ENCODE measurements at regions of chr6 and their contacts with region 1.

Region 1: GRCh38 chr6:69090132-69090531 is 455.1 kb downstream of the ADGRB3 start:
- DNase-seq: peak in 1 of 2 donors; percentile 17
- ATAC-seq: peak; percentile 55 to 98 (median 86)
- H3K4me3 ChIP-seq: no peak overlapping the region
- H3K27ac ChIP-seq: peak overlapping the region in 3 of 10 donors; percentile 17 to 61 (median 52)
- H3K4me1 ChIP-seq: peaks cover 0 to 14% (median 0%) of the 10 kb centered on the region in 9 donors
- H3K27me3 ChIP-seq: no peaks in the 10 kb centered on the region
- CTCF ChIP-seq: no peak

Region 2: DNA sequence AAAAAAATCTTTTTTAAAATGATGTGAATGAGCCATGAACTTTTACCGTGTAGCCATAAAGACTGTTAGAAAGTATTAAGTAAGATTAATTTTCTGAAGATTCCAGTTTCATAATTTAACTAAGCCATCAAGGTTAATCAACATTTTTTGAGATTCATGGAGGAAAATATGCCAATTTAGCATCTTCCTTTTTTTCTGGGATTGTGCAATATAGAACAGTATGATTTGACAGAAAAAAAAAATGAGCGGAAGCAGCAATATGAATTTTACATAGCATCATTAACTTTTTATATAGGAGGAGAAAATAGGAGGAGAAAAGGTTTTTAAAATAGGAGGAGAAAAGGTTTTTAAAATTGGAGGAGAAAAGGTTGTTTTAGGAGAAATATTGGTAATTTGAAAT is 148.8 kb before region 1 on chr6:
- intact Hi-C with region 1: no loop called
- DNase-seq: no peak
- ATAC-seq: no peak
- H3K4me3 ChIP-seq: no peak overlapping the region
- H3K27ac ChIP-seq: no peak overlapping the region
- H3K4me1 ChIP-seq: no peaks in the 10 kb centered on the region
- H3K27me3 ChIP-seq: no peaks in the 10 kb centered on the region
- CTCF ChIP-seq: no peak

Region 3: DNA sequence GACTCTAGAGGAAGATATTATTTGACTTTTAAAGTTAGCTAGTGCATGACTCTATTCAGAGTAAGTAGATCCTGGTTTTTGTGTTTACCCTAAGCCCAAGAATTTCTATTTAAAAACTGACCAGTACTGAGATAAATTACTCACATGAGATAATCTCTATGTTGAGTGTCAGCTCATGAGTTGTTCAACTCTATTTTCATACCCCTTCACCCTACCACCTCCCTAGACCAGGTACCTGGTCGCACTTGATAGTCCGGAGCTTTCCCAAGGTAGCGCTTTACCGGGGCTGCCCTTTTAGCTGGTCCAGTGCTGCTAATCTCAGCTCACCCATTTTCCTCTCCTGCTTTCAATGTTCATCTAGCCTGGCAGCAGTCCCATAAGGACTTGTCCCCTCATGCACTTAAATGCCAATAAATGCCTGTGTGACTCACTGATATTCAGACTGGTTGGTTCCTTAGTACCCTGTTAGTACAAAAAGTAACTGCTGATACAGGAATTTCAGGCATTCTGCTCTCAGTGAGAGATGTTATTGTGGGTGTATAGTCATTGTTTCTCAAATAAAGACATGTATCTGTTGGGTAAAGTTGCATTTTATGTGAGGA is 48.9 kb after region 1 on chr6:
- intact Hi-C with region 1: loop called in 1 of 10 experiments (anchors 5 kb)
- DNase-seq: peak; percentile 19 to 43
- ATAC-seq: peak; percentile 44 to 90 (median 87)
- H3K4me3 ChIP-seq: peak overlapping the region in 6 of 10 donors; percentile 2 to 21 (median 18)
- H3K27ac ChIP-seq: peak overlapping the region; percentile 32 to 87 (median 78)
- H3K4me1 ChIP-seq: peaks cover 0 to 30% (median 0%) of the 10 kb centered on the region in 9 donors
- H3K27me3 ChIP-seq: no peaks in the 10 kb centered on the region
- CTCF ChIP-seq: no peak